Thyroid gland (tissue), 4 donors: ENCODE measurements at regions of chr18 and their contacts with region 1.

Region 1: GRCh38 chr18:5879479-5879882 is 15.8 kb downstream of the TMEM200C start:
- DNase-seq: no peak
- H3K4me3 ChIP-seq: no peak overlapping the region
- H3K27ac ChIP-seq: no peak overlapping the region
- H3K4me1 ChIP-seq: no peaks in the 10 kb centered on the region
- H3K27me3 ChIP-seq: no peaks in the 10 kb centered on the region
- CTCF ChIP-seq: peak; percentile 32 to 79 (median 70)
- POLR2A ChIP-seq: no peak

Region 2: DNA sequence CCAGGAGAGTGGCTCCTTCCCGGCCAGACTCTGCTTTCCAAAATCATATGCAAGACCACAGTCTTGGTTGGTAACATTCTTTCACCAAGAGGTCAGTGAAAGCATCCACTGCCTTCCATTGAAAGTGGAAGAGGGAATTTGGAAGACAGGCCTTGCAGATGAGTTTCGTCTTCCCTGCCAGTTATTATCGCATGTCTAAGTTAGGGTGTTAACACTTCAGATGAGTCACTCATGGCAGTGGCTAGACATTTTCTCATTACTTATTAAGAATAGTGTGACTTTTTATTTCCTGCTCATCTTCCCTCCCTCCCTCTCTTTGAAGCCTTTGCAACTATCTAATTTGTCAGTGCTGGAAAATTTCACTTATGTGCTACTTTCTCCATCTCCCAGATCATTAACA is 232.7 kb before region 1 on chr18:
- intact Hi-C with region 1: no loop called
- DNase-seq: no peak
- H3K4me3 ChIP-seq: no peak overlapping the region
- H3K27ac ChIP-seq: no peak overlapping the region
- H3K4me1 ChIP-seq: no peaks in the 10 kb centered on the region
- H3K27me3 ChIP-seq: no peaks in the 10 kb centered on the region
- CTCF ChIP-seq: no peak
- POLR2A ChIP-seq: no peak

Region 3: DNA sequence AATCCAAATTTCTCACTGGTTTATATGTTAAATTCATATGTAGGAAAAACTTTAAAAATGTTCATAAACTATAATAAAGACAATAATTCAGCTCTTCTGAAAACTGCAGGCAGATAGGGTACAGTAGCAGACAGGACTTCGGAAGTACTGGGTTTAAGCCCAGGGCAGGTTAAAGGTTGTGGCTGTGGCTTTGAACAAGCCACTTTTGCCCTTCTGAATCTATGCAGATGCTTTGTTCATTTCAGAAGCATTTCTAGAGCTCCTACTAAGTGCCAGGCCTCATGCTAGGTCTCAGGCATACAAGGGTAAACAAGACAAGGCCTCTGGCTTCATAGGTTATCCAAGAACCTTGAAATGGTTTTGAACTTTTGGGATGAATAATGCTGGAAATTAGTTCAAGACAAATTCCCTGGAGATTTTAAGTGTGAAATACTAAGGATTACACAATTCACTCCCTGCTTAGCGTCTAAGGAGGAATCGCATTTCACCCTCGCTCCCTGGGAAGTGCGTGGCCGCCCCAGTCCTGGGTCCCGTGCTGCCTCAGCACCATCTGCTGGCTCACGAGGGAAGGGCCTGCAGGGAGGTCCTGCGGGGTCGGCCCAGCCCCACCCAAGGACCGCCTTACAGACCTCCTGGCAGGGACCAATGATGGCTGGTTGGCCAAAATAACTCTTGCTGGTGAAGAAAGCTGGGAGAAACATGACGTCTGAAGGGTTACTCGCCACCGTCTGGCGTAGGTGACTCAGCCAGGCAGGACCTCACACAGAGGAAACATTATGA is 602.9 kb after region 1 on chr18:
- intact Hi-C with region 1: loop called (anchors 5 kb)
- DNase-seq: peak; percentile 69 to 73
- H3K4me3 ChIP-seq: no peak overlapping the region
- H3K27ac ChIP-seq: no peak overlapping the region
- H3K4me1 ChIP-seq: peaks cover 0 to 2% of the 10 kb centered on the region in 2 donors
- H3K27me3 ChIP-seq: no peaks in the 10 kb centered on the region
- CTCF ChIP-seq: peak in 5 of 6 experiments; percentile 59 to 93 (median 91)
- POLR2A ChIP-seq: no peak